ENCODE measurements at regions of chr6 and their contacts with region 1.

Region 1: DNA sequence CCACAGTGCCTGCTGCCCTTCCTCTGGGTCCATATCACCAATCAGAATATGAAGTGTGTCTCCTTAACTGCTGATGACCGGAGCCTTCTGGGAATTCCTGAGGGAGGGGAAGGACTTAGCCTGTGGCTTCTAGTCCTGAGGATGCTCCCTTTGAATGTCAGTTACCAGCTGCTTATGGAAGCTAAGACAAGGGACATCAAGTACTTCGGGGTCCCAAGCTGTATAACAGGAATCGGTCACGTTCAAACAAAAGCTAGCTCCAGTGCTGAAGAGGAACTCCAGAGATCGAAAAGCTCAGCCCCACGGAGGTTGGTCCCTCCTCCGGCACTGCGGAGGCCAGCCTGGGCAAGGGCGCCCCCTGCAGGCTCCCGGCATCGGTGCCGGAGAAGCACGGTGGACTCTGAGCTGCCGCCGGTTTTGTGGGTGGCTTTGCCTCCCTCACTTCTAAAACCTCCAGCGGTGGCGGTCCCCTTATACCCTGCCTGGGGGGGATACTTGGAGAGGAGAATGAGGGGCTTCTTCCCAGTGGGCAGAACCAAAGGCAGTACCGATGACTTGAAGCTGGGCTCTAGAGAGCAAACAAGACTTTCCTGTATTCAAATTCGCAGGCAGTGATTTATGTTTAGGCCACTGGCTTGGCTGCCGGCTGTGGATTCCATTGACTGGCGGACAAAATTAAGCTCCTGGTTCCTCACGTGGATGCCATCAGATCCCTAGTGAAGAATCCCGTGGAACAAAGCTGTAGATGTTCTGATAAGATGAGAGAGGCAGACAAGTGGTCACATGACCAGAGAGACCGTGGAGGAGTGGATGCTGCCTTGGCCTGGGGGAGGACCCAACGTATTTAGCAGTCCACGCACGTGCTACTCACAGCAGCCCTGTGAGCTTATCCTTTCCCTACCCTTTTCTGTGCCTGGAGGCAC is 16.2 kb upstream of the UBR2 start:
- DNase-seq: peak; percentile 90
- H3K4me3 ChIP-seq: peak overlapping the region; percentile 31 to 53 (median 46)
- H3K27ac ChIP-seq: peak overlapping the region; percentile 63 to 76 (median 74)
- H3K4me1 ChIP-seq: peaks cover 0 to 10% (median 5%) of the 10 kb centered on the region in 4 donors
- H3K27me3 ChIP-seq: no peaks in the 10 kb centered on the region
- CTCF ChIP-seq: peak; percentile 79 to 95 (median 92)
- EP300 ChIP-seq: no peak
- POLR2A ChIP-seq: no peak

Region 2: DNA sequence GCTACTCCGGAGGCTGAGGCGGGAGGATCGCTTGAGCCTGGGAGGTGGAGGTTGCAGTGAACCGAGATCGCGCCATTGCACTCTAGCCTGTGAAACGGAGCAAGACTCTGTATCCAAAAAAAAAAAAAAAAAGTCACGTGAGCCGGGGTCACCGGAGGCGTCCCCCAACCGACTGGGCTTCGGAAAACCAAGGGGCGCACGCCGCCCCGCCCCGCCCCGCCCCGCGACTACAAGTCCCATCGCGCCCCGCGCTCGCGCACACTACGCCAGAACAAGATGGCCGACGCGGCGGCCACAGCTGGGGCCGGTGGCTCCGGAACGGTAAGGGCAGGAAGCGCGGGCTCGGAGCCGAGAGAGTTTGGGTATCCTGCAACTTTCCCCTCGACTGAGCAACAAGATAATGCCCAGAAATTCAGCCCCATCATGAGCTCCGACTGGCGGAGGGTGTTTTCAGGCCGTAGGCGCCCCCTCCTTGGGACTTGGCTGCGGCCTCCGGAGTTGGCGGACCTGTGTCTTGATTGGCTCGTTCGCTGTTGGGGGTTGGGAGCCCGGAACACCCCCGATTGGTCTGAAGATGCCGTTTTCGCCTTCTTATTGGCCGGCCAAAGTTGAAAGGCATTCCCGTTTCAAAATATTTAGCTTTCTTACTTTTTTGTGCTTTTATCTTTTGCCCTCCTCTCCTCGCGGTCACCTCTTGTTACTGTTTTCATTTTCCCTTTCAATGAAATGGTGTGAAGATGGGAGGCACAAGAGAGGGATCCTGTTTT is 497.2 kb before region 1 on chr6 and contains the start of gene TAF8:
- intact Hi-C with region 1: loop called (anchors 10 kb)
- DNase-seq: peak; percentile 97
- H3K4me3 ChIP-seq: peak within 1 kb of the TSS; percentile 52 to 78 (median 62)
- H3K27ac ChIP-seq: peak within 1 kb of the TSS; percentile 79 to 96 (median 93)
- H3K4me1 ChIP-seq: peaks cover 0 to 67% (median 58%) of the 10 kb centered on the region in 4 donors
- H3K27me3 ChIP-seq: no peaks in the 10 kb centered on the region
- CTCF ChIP-seq: no peak
- EP300 ChIP-seq: peak in 2 of 4 donors; percentile 20 to 41
- POLR2A ChIP-seq: peak; percentile 72 to 76
- total RNA-seq, gene TAF8: 20.3 to 30.7 (median 28.4) TPM